CD4-positive, alpha-beta T cell (primary cell): ENCODE measurements at regions of chr2 and their contacts with region 1.

Region 1: DNA sequence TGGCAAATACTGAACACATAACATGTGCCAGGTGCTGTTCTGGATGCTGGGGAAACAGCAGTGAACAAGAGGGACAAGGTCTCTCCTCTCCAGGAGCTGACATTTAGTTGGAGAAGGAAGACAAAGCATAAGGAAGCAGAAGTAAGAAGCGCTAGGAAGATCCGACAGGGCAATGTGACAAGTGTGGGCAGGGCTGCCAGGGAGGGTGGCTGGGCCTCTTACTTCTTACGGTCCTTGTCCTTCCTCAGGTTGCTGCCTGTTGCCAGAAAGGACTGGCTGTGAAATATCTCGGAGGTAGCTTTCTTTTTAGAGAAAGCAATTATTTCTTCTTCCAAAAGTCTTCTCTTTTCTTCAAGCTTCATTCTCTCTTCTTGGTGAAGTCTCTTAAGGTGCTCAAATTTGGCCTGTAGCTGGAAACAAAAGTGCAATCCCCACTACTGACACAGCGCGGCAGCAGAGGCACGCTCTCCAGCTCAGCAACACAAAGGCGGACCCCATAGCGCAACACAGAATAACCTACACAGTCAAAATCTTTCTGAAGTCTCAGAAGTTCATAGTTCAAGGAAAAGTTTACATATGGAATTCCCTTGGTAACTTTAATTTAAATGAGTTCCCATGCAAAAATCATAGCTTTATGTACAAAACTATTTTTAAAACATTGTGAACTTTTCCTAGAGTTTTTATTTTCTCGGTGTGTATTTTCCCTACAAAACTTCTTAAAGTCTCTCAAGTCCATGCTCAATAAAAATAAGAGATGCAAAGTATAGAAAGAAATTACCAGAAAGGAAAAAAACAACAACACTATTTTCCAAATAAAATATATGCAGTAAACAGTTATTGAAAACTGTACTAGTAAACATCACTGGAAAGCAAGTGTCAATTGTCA is 67.7 kb downstream of the SEPTIN10 start:
- DNase-seq: peak in 13 of 14 experiments; percentile 25 to 71 (median 46)
- ATAC-seq: peak; percentile 90
- H3K4me3 ChIP-seq: no peak overlapping the region
- H3K4me3 Mint-ChIP-seq: no peak overlapping the region
- H3K27ac ChIP-seq: no peak overlapping the region
- H3K27ac Mint-ChIP-seq: no peak overlapping the region
- H3K4me1 ChIP-seq: no peaks in the 10 kb centered on the region
- H3K4me1 Mint-ChIP-seq: no peaks in the 10 kb centered on the region
- H3K27me3 ChIP-seq: no peaks in the 10 kb centered on the region
- H3K27me3 Mint-ChIP-seq: peaks cover 7% of the 10 kb centered on the region
- CTCF ChIP-seq: peak; percentile 87

Region 2: DNA sequence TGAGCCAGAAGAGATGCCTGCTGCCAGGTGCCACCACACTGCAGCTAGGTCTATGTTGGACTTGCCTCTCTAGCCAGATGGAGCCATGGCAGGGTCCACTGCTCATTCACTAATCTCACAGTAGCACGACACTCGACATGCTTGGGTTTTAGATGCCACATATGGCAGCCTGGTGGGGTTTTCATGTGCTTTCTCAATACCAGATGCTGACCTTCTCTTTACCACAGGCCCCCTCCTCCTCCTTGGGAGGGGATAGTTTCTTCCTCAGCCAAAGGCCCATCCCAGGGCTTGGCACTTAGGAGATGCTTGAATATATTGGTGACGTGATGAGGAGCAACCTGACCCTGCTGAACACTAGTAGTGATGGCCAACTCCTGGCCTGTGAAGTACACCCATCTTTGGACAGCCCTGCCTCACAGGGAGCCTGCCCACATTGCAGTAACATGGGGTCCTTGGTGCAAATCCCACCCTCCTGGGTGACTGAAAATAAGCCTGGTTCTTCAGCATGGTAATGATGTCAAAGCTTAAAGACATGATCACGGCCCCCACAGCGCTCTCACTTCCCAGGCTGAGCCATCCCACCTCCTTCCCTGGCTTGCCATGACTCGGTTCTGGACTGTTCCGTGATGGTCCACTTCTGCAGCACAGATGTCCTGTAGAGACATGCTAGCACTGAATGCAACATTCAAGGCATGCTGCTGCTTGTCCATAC is 189.6 kb before region 1 on chr2:
- CTCF ChIA-PET with region 1: no interaction called
- POLR2A ChIA-PET with region 1: no interaction called
- intact Hi-C with region 1: no loop called
- DNase-seq: no peak
- ATAC-seq: no peak
- H3K4me3 ChIP-seq: no peak overlapping the region
- H3K4me3 Mint-ChIP-seq: no peak overlapping the region
- H3K27ac ChIP-seq: no peak overlapping the region
- H3K27ac Mint-ChIP-seq: no peak overlapping the region
- H3K4me1 ChIP-seq: no peaks in the 10 kb centered on the region
- H3K4me1 Mint-ChIP-seq: peaks cover 5% of the 10 kb centered on the region
- H3K27me3 ChIP-seq: no peaks in the 10 kb centered on the region
- H3K27me3 Mint-ChIP-seq: no peaks in the 10 kb centered on the region
- CTCF ChIP-seq: no peak

Region 3: GRCh38 chr2:109438773-109439389 is 107.2 kb before region 1 on chr2:
- CTCF ChIA-PET with region 1: no interaction called
- POLR2A ChIA-PET with region 1: no interaction called
- intact Hi-C with region 1: no loop called
- DNase-seq: no peak
- ATAC-seq: no peak
- H3K4me3 ChIP-seq: no peak overlapping the region
- H3K4me3 Mint-ChIP-seq: no peak overlapping the region
- H3K27ac ChIP-seq: no peak overlapping the region
- H3K27ac Mint-ChIP-seq: no peak overlapping the region
- H3K4me1 ChIP-seq: no peaks in the 10 kb centered on the region
- H3K4me1 Mint-ChIP-seq: no peaks in the 10 kb centered on the region
- H3K27me3 ChIP-seq: peaks cover 0 to 2% of the 10 kb centered on the region in 2 experiments
- H3K27me3 Mint-ChIP-seq: no peaks in the 10 kb centered on the region
- CTCF ChIP-seq: no peak

Region 4: DNA sequence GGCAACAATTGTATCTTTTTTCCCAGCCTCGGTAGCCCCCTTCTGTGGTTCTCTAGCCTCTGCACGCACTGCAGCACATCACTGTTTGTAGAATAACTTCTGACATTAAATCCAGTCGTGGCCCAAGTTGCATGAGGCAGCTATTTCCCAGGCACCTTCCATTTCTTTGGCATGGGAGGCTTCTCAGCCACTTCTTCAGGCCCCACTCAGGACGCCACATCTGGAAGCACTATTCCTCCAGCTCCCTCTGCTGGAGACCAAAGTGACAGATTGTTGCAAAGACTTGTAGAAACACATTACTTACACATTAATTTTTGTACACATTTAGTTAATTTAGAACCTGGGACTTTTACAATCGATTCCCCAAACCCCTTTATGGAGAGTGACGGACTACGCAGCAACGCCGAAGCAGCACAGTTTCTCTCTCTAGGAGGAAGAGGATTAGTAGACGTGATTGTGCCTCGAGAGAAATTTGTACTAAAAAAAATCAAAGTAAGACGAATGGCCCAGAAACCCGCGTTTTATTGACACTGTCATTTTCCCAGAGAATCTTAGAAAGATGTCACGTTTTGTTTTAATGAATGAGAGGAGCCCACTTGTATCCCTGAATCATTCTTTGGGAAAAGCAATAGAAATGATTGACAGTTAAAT is 190.2 kb after region 1 on chr2:
- CTCF ChIA-PET with region 1: interaction called, 6 read pairs
- POLR2A ChIA-PET with region 1: no interaction called
- intact Hi-C with region 1: loop called in 1 of 2 experiments (anchors 5 kb)
- DNase-seq: peak in 5 of 14 experiments; percentile 5 to 28 (median 21)
- ATAC-seq: no peak
- H3K4me3 ChIP-seq: no peak overlapping the region
- H3K4me3 Mint-ChIP-seq: no peak overlapping the region
- H3K27ac ChIP-seq: no peak overlapping the region
- H3K27ac Mint-ChIP-seq: no peak overlapping the region
- H3K4me1 ChIP-seq: no peaks in the 10 kb centered on the region
- H3K4me1 Mint-ChIP-seq: no peaks in the 10 kb centered on the region
- H3K27me3 ChIP-seq: peaks cover 0 to 2% of the 10 kb centered on the region in 2 experiments
- H3K27me3 Mint-ChIP-seq: peaks cover 18% of the 10 kb centered on the region
- CTCF ChIP-seq: peak; percentile 23

Region 5: DNA sequence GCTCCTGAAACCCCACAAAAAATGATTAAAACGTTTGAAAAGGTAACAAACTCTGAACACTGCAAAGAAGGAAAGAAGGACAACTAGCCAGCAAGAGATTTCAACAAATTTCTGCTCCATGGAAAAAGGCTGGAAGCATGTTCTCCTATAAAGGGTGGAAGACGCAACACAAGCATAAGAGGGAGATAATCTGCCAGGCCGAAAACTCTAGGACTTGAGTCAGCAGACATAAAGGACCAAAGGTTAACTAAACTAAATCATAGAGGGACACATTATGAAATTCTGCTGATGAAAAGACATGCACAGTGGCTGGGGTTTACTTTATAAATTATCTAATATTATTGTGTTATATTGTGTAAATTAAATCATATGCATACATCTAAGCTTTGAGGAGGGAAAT is 651.9 kb after region 1 on chr2:
- CTCF ChIA-PET with region 1: no interaction called
- POLR2A ChIA-PET with region 1: no interaction called
- intact Hi-C with region 1: no loop called
- DNase-seq: no peak
- ATAC-seq: no peak
- H3K4me3 ChIP-seq: no peak overlapping the region
- H3K4me3 Mint-ChIP-seq: no peak overlapping the region
- H3K27ac ChIP-seq: no peak overlapping the region
- H3K27ac Mint-ChIP-seq: no peak overlapping the region
- H3K4me1 ChIP-seq: no peaks in the 10 kb centered on the region
- H3K4me1 Mint-ChIP-seq: no peaks in the 10 kb centered on the region
- H3K27me3 ChIP-seq: no peaks in the 10 kb centered on the region
- H3K27me3 Mint-ChIP-seq: no peaks in the 10 kb centered on the region
- CTCF ChIP-seq: no peak